ENCODE measurements at regions of chr5 and their contacts with region 1.

Region 1: DNA sequence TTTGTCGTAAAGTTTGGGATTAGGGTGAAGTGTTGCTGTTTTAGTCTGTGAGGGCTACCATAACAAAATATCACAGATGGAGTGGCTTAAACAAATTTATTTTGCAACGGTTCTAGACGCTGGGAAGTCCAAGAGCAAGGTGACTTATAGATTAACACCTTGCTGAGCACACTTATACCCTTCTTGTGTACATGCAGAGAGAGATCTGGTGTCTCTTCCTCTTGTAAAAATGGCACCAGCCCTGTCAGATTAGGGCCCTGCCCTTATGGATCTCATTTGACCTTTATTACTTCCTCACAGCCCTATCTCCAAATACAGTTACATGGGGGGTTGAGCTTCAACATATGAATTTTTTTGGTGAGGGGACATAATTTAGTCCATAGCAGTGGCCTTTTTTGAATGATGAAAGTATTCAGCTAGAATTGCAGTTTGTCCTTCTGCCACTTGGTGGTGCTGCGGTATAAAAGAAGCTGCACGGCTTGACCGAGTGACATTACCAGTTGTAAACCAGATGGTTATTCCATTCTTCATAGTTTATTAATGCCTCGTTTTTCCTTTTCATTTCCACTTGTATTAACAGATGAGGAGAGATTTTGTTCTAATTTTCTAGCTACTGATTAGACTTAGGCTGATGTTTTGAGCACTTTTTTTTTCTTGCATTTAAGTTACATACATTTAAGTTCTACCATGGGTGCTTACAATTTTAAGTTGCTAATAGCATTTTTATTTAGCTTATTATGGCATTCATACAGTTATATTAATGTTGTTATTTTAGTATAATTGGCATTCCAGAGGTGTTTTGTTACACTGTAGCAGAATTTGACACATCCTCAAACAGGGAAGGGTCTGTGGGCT is 19.4 kb downstream of the DCP2 start:
- DNase-seq: peak; percentile 31
- ATAC-seq: peak; percentile 74
- H3K4me3 Mint-ChIP-seq: no peak overlapping the region
- H3K27ac Mint-ChIP-seq: no peak overlapping the region
- H3K4me1 Mint-ChIP-seq: peaks cover 11% of the 10 kb centered on the region
- H3K27me3 Mint-ChIP-seq: no peaks in the 10 kb centered on the region
- CTCF ChIP-seq: peak; percentile 81

Region 2: GRCh38 chr5:112976432-112977309 is 19.3 kb before region 1 on chr5 and contains the start of gene DCP2:
- CTCF ChIA-PET with region 1: interaction called, 22 read pairs
- POLR2A ChIA-PET with region 1: interaction called, 6 read pairs
- intact Hi-C with region 1: no loop called
- DNase-seq: peak; percentile 93
- ATAC-seq: peak; percentile 98
- H3K4me3 Mint-ChIP-seq: peak within 1 kb of the TSS; percentile 100
- H3K27ac Mint-ChIP-seq: peak within 1 kb of the TSS; percentile 96
- H3K4me1 Mint-ChIP-seq: peaks cover 53% of the 10 kb centered on the region
- H3K27me3 Mint-ChIP-seq: no peaks in the 10 kb centered on the region
- CTCF ChIP-seq: no peak
- total RNA-seq, gene DCP2: 53.5 and 56.0 TPM in 2 replicates

Region 3: GRCh38 chr5:112983363-112983762 is 12.6 kb before region 1 on chr5:
- CTCF ChIA-PET with region 1: interaction called, 22 read pairs
- POLR2A ChIA-PET with region 1: no interaction called
- intact Hi-C with region 1: no loop called
- DNase-seq: no peak
- ATAC-seq: no peak
- H3K4me3 Mint-ChIP-seq: no peak overlapping the region
- H3K27ac Mint-ChIP-seq: no peak overlapping the region
- H3K4me1 Mint-ChIP-seq: peaks cover 45% of the 10 kb centered on the region
- H3K27me3 Mint-ChIP-seq: no peaks in the 10 kb centered on the region
- CTCF ChIP-seq: no peak

Region 4: DNA sequence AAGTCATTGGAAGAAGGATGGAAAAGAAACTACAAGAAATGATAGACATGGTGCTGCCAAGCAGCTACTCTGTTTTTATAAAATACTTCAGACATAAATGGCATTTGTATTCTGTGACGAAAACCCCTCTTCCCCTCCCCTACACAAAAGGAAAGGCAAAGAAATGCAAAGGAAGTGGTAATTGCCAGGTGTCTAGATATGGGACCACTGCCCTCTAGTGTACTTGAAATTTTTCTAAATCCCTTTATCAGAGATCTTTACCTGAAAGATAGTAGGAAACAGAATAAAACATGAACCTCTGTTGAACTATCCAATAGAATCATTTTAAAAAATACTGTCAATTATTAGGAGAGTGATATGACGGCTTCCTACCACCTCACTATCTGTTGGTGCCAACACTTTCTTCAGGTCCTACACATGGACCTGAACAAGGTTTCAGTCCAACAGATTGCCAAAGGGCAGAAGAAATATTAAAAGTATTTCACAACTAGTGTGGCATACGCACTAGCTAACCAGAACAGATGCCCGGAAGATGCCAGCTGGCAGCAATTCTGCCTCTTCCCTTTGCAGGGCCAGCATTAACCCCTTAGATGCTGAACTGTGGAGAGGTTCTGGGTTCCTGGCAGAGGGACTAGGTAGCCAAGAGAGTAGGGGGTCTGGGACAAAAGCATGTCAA is 334.7 kb after region 1 on chr5:
- CTCF ChIA-PET with region 1: interaction called, 33 read pairs
- POLR2A ChIA-PET with region 1: no interaction called
- intact Hi-C with region 1: loop called (anchors 1 kb)
- DNase-seq: no peak
- ATAC-seq: peak; percentile 57
- H3K4me3 Mint-ChIP-seq: no peak overlapping the region
- H3K27ac Mint-ChIP-seq: no peak overlapping the region
- H3K4me1 Mint-ChIP-seq: peaks cover 6% of the 10 kb centered on the region
- H3K27me3 Mint-ChIP-seq: peaks cover 4% of the 10 kb centered on the region
- CTCF ChIP-seq: no peak

Region 5: DNA sequence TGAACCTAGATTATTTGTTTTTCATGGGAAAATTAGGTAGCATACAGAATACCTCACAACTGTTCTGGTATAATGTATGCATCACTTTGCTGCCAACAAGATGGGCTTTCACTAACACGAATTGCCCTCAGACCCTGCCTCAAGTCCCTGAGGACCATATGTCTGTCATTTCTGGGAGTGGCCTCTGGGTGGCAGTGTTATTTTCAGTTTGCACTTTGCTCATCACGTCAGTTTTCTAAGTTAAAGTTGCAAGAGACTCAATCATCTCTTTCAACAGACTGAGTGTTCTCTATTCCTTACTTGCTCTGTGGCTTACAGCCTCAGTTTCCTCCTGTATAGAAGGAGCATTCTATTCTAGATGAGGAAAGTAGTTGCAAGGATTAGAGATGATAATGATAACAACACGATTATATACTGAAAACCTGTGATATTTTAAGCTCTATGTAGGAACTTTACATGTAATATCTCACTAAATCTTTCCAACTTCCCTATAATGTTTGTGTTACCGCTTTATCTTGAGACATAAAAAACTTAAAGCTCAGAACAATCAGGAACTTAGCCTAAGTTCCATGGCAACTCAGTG is 383.1 kb after region 1 on chr5:
- CTCF ChIA-PET with region 1: interaction called, 6 read pairs
- POLR2A ChIA-PET with region 1: no interaction called
- intact Hi-C with region 1: loop called (anchors 2 kb)
- DNase-seq: no peak
- ATAC-seq: peak; percentile 71
- H3K4me3 Mint-ChIP-seq: no peak overlapping the region
- H3K27ac Mint-ChIP-seq: no peak overlapping the region
- H3K4me1 Mint-ChIP-seq: peaks cover 5% of the 10 kb centered on the region
- H3K27me3 Mint-ChIP-seq: peaks cover 18% of the 10 kb centered on the region
- CTCF ChIP-seq: no peak

Region 6: DNA sequence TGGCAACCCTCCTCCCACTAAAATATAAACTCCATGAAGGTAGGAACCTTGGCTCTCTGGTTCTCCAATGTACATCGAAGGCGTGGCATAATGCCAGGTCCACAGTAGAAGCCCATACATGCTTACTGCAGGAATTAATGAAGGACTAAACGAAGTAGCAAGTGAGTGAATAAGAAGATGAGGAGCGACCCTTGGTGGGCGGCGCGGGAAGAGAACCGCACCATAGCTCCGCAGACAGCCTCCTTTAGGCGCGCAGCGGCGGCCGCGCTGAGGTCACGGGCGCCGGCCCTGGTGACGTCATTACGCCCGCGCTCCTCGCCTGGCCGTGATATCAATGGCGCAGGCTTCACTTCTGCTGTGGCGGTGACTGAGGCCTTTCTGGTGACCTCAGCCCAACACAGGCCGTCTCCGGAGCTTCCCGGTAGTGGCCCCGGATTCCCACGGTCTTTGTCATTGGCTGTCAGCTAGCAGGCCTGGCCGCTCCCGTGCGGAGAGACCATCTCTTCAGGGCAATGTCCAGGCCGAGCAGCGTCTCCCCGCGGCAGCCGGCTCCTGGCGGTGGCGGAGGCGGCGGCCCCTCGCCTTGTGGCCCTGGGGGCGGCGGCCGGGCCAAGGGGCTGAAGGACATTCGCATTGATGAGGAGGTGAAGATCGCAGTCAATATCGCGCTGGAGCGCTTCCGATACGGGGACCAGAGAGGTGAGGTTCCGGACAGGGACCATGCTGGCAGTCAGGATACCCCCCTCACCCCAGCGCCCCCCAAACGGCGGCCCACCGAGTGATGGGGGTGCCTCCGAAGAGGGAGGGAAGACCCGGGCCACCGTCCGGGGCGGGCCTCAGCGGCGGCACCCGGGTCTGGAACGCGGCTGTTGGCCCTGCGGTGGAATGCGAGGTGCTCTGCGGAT is 517.6 kb after region 1 on chr5 and contains the start of gene YTHDC2:
- CTCF ChIA-PET with region 1: interaction called, 23 read pairs
- POLR2A ChIA-PET with region 1: interaction called, 5 read pairs
- intact Hi-C with region 1: loop called (anchors 1 kb)
- DNase-seq: peak; percentile 86
- ATAC-seq: peak; percentile 98
- H3K4me3 Mint-ChIP-seq: peak within 1 kb of the TSS; percentile 92
- H3K27ac Mint-ChIP-seq: peak within 1 kb of the TSS; percentile 87
- H3K4me1 Mint-ChIP-seq: peaks cover 28% of the 10 kb centered on the region
- H3K27me3 Mint-ChIP-seq: peaks cover 12% of the 10 kb centered on the region
- CTCF ChIP-seq: no peak
- total RNA-seq, gene YTHDC2: 41.7 and 44.8 TPM in 2 replicates

Region 7: DNA sequence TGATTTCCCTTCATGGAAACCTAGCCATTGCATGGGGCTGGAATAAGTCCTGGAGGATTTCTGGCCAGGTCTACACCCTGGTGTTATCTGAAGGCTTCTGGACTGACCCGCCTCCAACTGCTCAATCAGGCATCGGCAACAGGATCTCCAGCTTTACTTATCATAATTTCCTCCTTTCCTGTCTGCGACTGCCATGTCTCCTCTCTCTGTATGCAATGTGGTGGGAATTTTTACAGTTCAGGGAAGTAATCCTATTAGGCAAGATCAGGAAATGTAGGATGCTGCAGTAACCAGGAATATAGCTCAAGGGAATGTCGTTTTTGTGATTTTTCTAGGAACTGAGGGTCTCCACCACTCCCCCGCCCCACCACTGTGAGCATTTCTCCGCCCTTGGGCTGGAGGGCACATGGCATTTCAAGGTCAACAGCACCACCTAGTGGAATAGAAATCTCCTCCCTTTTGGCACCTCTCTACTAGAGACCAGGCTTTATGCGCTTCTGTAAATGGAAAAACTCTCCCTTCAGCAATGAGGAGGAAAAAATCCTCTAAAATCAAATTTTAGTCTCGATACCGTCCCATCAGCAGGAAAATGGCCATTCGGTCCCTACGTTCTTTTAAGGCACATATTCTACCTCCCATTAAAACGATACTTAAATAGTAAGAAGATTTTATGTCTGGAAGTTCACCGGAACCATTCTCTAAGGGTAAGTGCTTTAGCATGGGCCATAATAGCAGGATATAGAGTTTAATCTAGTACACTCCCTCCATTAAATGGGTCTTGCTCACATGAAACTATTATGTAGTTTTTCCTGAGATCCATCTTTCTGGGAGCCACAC is 610.5 kb after region 1 on chr5:
- CTCF ChIA-PET with region 1: interaction called, 39 read pairs
- POLR2A ChIA-PET with region 1: no interaction called
- intact Hi-C with region 1: loop called (anchors 1 kb)
- DNase-seq: no peak
- ATAC-seq: peak; percentile 73
- H3K4me3 Mint-ChIP-seq: no peak overlapping the region
- H3K27ac Mint-ChIP-seq: no peak overlapping the region
- H3K4me1 Mint-ChIP-seq: no peaks in the 10 kb centered on the region
- H3K27me3 Mint-ChIP-seq: peaks cover 30% of the 10 kb centered on the region
- CTCF ChIP-seq: peak; percentile 61